Pancreas (tissue), 10 donors: ENCODE measurements at regions of chr13 and their contacts with region 1.

Region 1: DNA sequence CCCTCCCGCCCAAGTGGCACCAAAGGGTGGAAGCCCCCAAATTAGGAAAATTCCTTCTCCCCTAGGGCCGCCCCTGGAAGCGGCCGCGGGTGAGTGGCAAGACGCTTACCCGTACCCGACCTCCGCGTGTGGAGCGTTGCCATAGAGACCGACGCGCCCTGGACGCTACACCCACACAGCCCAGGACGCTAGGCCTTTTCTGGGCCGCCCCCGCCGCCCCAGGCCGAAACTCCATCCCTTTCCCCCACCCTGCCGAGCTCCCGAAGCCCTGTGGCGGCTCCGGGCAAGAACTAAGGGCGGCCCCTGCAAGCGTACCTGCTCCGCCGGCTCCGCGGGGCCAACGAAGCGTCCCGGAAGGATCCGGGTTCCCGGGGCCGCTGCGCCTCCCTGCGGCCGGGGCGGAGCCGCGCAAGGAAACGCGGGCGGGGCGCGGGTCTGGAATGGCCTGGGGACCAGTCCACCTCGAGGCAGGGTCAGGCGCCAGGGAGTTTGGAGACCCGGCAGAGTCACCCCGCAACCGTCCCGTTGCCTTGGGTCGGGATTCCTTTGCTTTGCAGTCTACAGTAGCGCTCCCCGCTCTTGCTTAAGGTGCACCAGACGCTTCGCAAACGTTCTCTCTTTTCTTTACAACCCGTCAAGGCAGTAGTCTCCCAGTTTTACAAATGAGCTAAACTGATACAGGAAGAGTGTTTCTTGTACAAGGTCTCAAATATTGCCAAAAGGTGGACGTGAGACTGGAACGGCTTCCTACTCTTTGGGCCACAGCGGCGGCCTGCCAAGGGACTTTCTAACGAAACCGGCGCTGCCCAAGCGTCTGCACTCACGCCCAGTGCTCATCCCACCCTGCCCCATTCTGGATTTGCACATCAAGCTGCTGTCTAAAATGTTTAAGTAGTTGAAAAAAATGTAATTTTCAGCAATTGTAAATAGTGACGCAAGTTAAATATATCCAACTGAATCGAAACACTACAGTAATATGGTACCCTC is at the start of gene NEK5:
- DNase-seq: peak; percentile 57 to 93 (median 70)
- ATAC-seq: peak; percentile 90 to 94 (median 92)
- H3K4me3 ChIP-seq: peak within 1 kb of the TSS; percentile 58 to 89 (median 71)
- H3K27ac ChIP-seq: peak within 1 kb of the TSS in 2 of 4 donors; percentile 1 to 47
- H3K4me1 ChIP-seq: peaks cover 0 to 6% (median 4%) of the 10 kb centered on the region in 3 donors
- H3K27me3 ChIP-seq: no peaks in the 10 kb centered on the region
- CTCF ChIP-seq: peak; percentile 47 to 70 (median 58)
- total RNA-seq, gene NEK5: 0.09 to 0.50 (median 0.18) TPM

Region 2: GRCh38 chr13:51895906-51896888 is 232.8 kb before region 1 on chr13:
- intact Hi-C with region 1: loop called in 2 of 3 experiments (anchors 5 kb)
- DNase-seq: peak; percentile 24 to 70 (median 52)
- ATAC-seq: peak; percentile 66 to 95 (median 92)
- H3K4me3 ChIP-seq: no peak overlapping the region
- H3K27ac ChIP-seq: no peak overlapping the region
- H3K4me1 ChIP-seq: no peaks in the 10 kb centered on the region
- H3K27me3 ChIP-seq: no peaks in the 10 kb centered on the region
- CTCF ChIP-seq: peak in 3 of 4 donors; percentile 30 to 52 (median 46)

Region 3: DNA sequence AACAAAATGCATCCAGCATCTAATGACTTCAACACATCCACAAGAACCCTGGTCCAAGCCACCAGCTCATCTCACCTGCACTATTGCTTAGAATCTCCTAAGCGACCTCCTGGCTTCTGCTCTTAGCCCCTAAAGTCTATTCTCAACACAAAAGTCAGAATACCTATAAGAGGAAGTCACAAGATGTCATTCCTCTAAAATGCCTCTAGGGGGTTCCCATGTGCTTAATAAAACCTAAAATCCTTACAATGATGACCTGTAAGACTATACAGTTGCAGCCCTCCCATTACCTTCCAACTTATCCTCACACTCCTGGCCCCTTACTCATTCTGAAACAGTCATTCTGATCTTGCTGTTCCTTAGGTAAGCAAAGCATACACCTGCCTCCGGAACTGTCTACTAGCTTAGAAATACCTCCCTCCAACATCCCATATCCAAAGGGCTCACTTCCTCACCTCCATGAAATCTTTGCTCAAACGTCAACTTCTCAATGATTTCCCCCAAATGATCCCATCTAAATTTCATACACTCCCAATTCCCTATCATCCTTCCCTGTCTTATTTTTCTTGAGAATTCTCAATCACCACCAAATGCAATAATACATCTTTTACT is 127.8 kb before region 1 on chr13:
- intact Hi-C with region 1: loop called in 2 of 3 experiments (anchors 10 kb)
- DNase-seq: no peak
- ATAC-seq: peak in 3 of 4 donors; percentile 56 to 60 (median 56)
- H3K4me3 ChIP-seq: no peak overlapping the region
- H3K27ac ChIP-seq: no peak overlapping the region
- H3K4me1 ChIP-seq: peaks cover 12 to 24% (median 18%) of the 10 kb centered on the region in 3 donors
- H3K27me3 ChIP-seq: no peaks in the 10 kb centered on the region
- CTCF ChIP-seq: peak; percentile 38 to 69 (median 59)